ENCODE measurements at regions of chr5 and their contacts with region 1.

Region 1: DNA sequence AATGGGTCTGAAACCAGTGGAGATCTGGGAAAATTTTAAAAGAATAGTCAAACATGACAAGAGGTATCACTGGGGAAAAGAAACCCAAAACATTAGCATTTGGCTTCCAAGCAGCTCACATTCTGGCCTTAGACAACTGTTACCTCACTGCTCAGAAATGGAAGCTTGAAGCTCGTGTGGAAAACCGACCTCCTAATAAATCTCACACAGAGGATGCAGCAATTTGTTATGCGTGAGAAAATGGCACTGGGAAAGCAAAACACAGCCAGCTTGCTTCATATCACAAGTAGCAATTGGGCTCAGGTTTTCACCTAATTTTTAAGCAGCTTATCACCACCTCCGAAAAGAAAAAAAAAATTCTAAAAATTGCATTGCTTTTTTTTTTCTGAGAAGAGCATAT is 103.3 kb upstream of the TAS2R1 start:
- DNase-seq: no peak
- H3K4me3 ChIP-seq: no peak overlapping the region
- H3K27ac ChIP-seq: no peak overlapping the region
- H3K4me1 ChIP-seq: no peaks in the 10 kb centered on the region
- H3K27me3 ChIP-seq: no peaks in the 10 kb centered on the region
- CTCF ChIP-seq: no peak
- EP300 ChIP-seq: no peak
- POLR2A ChIP-seq: no peak

Region 2: GRCh38 chr5:9771079-9771478 is 37.6 kb after region 1 on chr5:
- in situ Hi-C with region 1: no loop called
- intact Hi-C with region 1: loop called (anchors 1 kb)
- DNase-seq: no peak
- H3K4me3 ChIP-seq: no peak overlapping the region
- H3K27ac ChIP-seq: no peak overlapping the region
- H3K4me1 ChIP-seq: no peaks in the 10 kb centered on the region
- H3K27me3 ChIP-seq: no peaks in the 10 kb centered on the region
- CTCF ChIP-seq: no peak
- EP300 ChIP-seq: no peak
- POLR2A ChIP-seq: no peak